ENCODE measurements at regions of chr13 and their contacts with region 1.

Region 1: DNA sequence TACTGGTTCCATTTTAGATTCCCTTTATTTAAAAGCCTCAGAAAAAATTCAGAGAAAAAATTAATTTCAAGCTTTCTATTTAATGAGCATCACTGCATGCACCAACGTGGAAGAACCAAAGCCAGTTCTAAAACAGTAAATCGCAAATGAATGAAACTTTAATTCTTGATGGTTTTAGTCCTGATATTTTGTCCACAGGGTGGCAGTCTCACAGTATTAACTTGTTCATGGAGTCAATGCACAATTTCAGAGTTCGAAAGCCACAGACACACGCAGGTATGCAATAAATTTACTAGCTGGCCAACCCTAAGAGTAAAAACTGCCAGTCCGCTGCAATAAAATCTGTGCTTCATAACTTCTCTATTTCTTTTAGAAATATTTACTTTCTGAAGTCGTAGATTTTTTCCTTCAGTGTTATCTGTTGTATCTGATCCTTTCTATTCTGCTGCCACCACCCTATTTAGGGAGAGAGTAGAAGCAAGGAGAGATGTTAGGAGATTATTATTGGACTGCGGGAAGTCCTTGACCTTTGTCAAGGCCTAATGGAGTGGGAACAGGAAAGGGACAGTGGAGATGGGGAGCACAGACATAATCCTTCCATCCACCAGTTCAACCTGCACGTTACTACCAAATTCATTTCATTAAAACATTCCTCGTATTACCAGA is 7.0 kb upstream of the WBP4 start:
- DNase-seq: no peak
- H3K4me3 Mint-ChIP-seq: no peak overlapping the region
- H3K27ac Mint-ChIP-seq: no peak overlapping the region
- H3K4me1 Mint-ChIP-seq: peaks cover 56% of the 10 kb centered on the region
- H3K27me3 Mint-ChIP-seq: no peaks in the 10 kb centered on the region

Region 2: DNA sequence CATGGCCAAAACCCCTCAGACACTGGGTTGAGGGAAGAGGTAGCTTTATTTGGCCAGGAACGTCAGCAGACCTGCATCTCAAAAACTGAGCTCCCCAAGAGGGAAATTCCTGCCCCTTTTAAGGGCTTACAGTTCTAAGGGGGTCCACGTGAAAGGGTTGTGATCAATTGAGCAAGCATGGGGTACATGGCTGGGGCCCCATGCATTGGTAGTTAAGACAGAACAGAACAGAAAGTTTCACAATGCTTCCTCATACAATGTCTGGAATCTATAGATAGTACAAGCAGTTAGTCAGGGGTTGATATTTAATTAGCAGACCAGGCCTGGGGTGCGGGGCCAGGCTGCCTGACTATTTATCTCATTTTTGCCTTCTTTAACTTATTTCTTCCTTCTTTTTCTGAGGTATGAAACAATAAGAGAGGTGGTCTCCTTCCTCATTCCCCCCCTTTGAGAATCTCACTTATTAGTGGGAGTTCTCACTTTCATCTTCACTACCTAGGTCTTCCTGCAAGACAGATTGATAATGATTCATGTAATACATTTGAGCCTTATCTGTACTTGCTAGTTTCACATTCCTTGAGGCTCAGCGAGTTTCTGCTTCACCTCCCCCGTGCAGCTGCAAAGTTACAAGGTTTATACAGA is 180.1 kb before region 1 on chr13:
- CTCF ChIA-PET with region 1: no interaction called
- POLR2A ChIA-PET with region 1: no interaction called
- intact Hi-C with region 1: no loop called
- DNase-seq: no peak
- H3K4me3 Mint-ChIP-seq: no peak overlapping the region
- H3K27ac Mint-ChIP-seq: no peak overlapping the region
- H3K4me1 Mint-ChIP-seq: no peaks in the 10 kb centered on the region
- H3K27me3 Mint-ChIP-seq: no peaks in the 10 kb centered on the region

Region 3: GRCh38 chr13:41019011-41019487 is 35.3 kb before region 1 on chr13 and contains the start of gene ELF1:
- CTCF ChIA-PET with region 1: interaction called, 38 read pairs
- POLR2A ChIA-PET with region 1: interaction called, 13 read pairs
- intact Hi-C with region 1: loop called (anchors 1 kb)
- DNase-seq: peak; percentile 67
- H3K4me3 Mint-ChIP-seq: peak within 1 kb of the TSS; percentile 92
- H3K27ac Mint-ChIP-seq: peak within 1 kb of the TSS; percentile 98
- H3K4me1 Mint-ChIP-seq: peaks cover 36% of the 10 kb centered on the region
- H3K27me3 Mint-ChIP-seq: no peaks in the 10 kb centered on the region
- total RNA-seq, gene ELF1: 70.8 to 71.2 TPM

Region 4: DNA sequence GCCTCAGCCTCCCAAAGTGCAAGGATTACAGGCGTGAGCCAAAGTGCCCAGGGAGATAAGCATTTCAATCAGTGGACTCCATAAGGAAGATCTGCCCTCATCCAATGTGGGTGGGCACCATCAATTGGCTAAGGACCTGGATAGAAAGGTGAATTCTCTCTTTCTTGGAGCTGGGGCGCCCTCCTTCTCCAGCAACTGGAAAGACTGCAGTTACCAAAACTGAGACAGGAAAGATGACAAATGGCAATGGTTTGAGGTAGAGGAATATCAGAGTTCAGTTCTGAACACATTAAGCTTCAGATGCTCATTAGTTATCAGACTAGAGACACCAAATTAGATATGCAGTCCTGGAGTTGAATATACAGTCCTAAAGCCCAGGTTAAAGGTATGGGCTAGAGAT is 24.7 kb before region 1 on chr13:
- CTCF ChIA-PET with region 1: interaction called, 12 read pairs
- POLR2A ChIA-PET with region 1: interaction called, 3 read pairs
- intact Hi-C with region 1: no loop called
- DNase-seq: peak; percentile 45
- H3K4me3 Mint-ChIP-seq: no peak overlapping the region
- H3K27ac Mint-ChIP-seq: no peak overlapping the region
- H3K4me1 Mint-ChIP-seq: peaks cover 25% of the 10 kb centered on the region
- H3K27me3 Mint-ChIP-seq: no peaks in the 10 kb centered on the region

Region 5: DNA sequence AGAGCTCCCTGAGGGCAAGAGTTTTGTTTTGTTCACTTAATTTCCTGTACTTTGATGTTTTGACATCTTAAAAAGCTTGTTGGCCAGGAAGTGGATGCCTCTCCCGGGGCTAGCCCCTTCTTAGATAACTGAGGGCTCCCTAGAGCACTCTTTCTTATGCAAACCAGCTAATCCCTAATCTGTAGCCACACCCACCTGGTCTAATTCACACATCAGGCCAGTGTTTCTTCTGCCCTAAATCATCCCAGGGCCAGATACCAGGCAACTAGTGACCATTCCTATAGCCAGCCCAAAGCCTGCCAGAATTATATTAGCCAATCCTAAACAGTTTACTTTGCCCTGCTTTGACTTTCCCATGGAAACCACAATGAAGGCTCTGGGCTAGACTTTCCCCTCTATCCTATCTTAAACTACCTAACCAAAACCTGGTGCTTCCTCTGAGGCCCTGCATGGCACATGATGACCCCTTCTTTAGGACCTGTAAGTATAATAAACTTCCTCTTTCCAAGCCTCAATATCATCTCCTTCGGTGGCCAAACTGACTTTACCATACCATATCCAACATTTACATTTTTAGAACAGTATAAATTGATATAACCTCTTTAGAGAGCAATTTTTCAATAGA is 31.7 kb after region 1 on chr13:
- CTCF ChIA-PET with region 1: no interaction called
- POLR2A ChIA-PET with region 1: no interaction called
- intact Hi-C with region 1: no loop called
- DNase-seq: no peak
- H3K4me3 Mint-ChIP-seq: no peak overlapping the region
- H3K27ac Mint-ChIP-seq: no peak overlapping the region
- H3K4me1 Mint-ChIP-seq: no peaks in the 10 kb centered on the region
- H3K27me3 Mint-ChIP-seq: no peaks in the 10 kb centered on the region

Region 6: DNA sequence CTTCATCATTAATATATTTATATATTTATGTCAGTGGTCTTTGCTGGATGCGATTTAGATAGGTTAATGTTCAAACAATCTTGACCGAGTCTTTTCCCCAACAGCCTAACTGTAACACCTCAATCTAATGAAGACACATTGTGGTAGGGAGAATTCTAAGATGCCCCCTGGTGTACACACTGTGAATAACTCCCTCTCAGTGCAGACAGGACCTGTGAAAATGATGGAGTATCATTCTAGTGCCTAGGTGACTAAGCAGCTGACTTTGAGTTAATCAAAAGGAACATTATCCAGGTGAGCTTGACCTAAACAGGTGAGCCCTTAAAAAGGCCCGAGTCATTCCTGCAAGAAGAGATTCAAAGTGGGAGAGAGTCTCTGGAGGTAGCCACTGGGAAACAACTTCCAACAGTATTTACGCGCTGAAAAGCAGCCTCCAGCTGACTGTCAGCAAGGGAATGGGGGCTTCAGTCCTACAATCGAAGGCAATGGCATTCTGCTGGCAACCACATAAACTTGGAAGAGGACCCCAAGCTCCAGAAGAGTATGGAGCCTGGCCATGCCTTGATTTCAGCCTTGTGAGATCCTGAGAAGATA is 168.0 kb after region 1 on chr13:
- CTCF ChIA-PET with region 1: interaction called, 36 read pairs
- POLR2A ChIA-PET with region 1: no interaction called
- intact Hi-C with region 1: loop called (anchors 1 kb)
- DNase-seq: peak; percentile 62
- H3K4me3 Mint-ChIP-seq: no peak overlapping the region
- H3K27ac Mint-ChIP-seq: no peak overlapping the region
- H3K4me1 Mint-ChIP-seq: no peaks in the 10 kb centered on the region
- H3K27me3 Mint-ChIP-seq: no peaks in the 10 kb centered on the region

Region 7: DNA sequence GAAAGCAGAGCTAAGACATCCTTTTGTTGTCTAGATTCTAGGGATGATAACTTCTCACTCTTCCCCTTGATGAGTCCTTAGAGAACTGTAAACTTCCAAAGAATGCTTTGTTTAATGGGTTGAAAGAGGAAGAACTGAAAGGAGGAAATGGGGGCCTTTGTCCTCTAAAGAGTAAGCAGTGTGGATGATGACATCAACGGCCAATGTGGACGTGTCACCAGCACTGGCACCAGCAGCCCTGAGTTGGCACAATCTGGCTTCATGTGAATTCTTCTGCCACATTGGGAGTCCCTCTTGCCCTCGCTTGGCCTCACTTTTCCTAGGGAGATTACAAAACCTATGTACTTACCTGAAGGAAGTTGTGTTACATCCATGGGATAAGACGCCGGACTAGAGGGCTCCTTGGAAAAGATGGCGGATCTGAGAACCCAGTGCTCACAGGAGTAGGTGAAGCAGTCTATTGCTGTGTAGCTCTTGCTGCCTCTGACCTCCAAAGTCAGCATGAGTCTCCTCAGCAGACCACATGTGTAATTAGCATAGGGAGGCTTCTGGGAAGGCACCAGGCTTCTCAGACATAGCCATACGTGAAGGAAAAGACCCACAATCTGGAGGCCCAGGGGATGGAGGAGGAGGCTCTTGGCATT is 465.8 kb after region 1 on chr13:
- CTCF ChIA-PET with region 1: no interaction called
- POLR2A ChIA-PET with region 1: no interaction called
- intact Hi-C with region 1: no loop called
- DNase-seq: no peak
- H3K4me3 Mint-ChIP-seq: no peak overlapping the region
- H3K27ac Mint-ChIP-seq: peak overlapping the region; percentile 45
- H3K4me1 Mint-ChIP-seq: no peaks in the 10 kb centered on the region
- H3K27me3 Mint-ChIP-seq: no peaks in the 10 kb centered on the region